Colonic mucosa (tissue), 4 donors: ENCODE measurements at regions of chr11 and their contacts with region 1.

Region 1: GRCh38 chr11:2196970-2197770 is 25.6 kb upstream of the TH start:
- DNase-seq: peak; percentile 76
- H3K4me3 ChIP-seq: no peak overlapping the region
- H3K27ac ChIP-seq: no peak overlapping the region
- H3K4me1 ChIP-seq: peaks cover 3% of the 10 kb centered on the region
- H3K27me3 ChIP-seq: no peaks in the 10 kb centered on the region
- CTCF ChIP-seq: peak; percentile 61

Region 2: DNA sequence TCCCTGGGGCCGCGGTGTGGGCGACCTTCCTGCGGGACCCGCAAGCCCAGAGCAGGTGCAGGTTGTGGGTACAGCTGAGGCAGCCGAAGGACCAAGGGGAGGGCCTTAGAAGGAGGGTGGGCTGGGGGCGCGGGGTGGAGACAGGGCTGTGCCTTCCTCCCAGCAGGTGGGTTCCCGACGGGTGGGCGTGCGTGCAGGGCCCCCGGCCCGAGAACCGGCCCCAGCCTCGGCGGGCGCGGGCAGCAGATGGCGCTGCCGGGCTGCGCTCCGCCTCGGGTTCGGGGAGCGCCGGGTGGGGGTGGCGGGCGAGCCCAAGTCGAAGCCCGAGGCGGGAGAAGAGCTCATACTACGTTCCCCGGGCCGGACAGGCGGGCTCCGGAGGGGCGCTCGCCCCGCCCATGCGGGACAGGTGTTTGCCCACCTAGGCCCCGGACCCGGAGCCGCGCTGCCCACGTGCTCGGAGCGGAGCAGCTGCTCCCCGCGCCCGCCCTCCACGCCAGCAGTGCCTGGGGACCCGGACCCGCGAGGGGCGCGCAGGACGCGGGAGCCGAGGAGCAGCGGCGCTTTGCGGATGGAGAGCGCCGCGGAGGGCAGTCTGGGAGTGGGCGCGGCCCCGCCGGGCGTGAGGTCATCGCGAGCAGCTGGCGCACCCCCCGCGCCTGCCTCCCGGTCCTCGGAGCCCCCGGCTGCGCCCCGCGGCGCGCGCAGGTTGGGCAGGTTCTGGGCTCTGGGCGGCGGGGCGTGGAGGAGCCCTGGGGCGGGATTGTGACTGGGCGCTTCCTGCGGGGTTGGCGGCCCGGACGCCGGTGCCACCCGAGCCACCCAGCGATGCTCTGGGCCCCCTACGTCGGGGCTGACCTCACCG is 650.4 kb before region 1 on chr11:
- intact Hi-C with region 1: no loop called
- DNase-seq: peak; percentile 61
- H3K4me3 ChIP-seq: peak overlapping the region; percentile 47
- H3K27ac ChIP-seq: peak overlapping the region; percentile 85
- H3K4me1 ChIP-seq: peaks cover 7% of the 10 kb centered on the region
- H3K27me3 ChIP-seq: peaks cover 10% of the 10 kb centered on the region
- CTCF ChIP-seq: peak; percentile 53

Region 3: DNA sequence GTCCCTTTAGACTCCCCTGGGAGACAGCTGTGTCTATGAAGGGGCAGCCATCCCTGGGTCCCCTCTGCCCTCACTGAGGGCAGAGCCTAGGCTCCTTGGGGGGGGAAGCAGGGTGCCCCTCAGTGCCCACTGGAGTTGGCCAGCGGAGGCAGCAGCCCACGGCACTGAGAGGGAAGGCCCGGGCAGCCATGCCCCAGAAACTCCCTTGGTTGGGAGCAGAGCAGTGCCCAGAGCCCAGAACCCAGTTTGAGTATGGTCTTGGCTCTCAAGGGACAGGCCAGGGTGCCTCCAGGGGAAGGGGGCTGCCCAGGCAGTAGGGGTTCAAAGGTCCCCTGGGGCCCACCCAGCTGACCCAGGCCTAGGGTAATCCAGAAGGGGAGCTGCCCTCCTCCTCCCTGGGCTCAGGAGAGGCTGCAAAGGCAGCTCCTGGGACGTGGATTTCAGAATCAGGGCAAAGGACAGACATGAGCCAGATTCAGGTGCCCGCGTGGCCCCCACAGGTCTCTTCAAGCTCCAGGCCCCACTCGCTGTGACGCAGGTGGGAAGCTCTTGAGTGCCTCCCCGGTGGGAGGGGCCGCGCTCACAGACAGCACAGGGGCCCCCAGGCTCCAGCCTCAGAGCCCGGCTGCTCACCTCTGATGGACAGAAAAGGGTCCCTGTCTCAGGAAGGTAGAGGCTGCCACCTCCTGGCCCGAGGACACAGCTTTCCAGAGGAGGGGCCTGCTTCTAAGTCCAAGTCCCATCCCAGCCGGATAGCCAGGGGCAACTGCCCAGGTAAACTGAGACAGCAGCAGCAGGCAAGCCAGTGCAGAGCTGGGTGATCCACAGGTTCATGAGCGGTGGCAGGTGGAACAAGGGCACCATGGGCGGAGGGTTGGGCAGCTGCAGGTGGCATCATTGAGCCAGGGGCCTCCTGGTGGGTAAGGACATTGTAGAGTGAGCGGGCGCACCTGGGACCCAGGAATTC is 101.9 kb after region 1 on chr11:
- intact Hi-C with region 1: loop called (anchors 2 kb)
- DNase-seq: peak; percentile 38
- H3K4me3 ChIP-seq: no peak overlapping the region
- H3K27ac ChIP-seq: no peak overlapping the region
- H3K4me1 ChIP-seq: no peaks in the 10 kb centered on the region
- H3K27me3 ChIP-seq: no peaks in the 10 kb centered on the region
- CTCF ChIP-seq: peak; percentile 26

Region 4: GRCh38 chr11:2420502-2421225 is 223.5 kb after region 1 on chr11:
- intact Hi-C with region 1: loop called (anchors 2 kb)
- DNase-seq: peak; percentile 79
- H3K4me3 ChIP-seq: peak overlapping the region; percentile 27
- H3K27ac ChIP-seq: no peak overlapping the region
- H3K4me1 ChIP-seq: peaks cover 7% of the 10 kb centered on the region
- H3K27me3 ChIP-seq: peaks cover 7% of the 10 kb centered on the region
- CTCF ChIP-seq: peak; percentile 87

Region 5: GRCh38 chr11:2892215-2893020 is 695.2 kb after region 1 on chr11:
- intact Hi-C with region 1: loop called (anchors 10 kb)
- DNase-seq: peak; percentile 72
- H3K4me3 ChIP-seq: peak overlapping the region; percentile 26
- H3K27ac ChIP-seq: peak overlapping the region; percentile 2
- H3K4me1 ChIP-seq: peaks cover 10% of the 10 kb centered on the region
- H3K27me3 ChIP-seq: no peaks in the 10 kb centered on the region
- CTCF ChIP-seq: peak; percentile 90